Right cardiac atrium (tissue), 5 donors: ENCODE measurements at regions of chr14 and their contacts with region 1.

Region 1: DNA sequence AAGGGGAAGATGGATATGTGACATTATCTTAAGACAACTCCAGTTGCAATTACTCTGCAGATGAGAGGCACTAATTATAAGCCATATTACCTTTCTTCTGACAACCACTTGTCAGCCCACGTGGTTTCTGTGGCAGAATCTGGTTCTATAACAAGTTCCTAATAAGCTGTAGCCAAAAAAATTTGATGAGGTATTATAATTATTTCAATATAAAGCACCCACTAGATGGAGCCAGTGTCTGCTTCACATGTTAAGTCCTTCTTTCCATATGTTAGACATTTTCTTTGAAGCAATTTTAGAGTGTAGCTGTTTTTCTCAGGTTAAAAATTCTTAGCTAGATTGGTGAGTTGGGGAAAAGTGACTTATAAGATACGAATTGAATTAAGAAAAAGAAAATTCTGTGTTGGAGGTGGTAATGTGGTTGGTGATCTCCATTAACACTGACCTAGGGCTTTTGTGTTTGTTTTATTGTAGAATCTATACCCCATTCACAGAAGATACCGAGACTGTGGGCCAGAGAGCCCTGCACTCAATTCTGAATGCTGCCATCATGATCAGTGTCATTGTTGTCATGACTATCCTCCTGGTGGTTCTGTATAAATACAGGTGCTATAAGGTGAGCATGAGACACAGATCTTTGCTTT is 36.9 kb downstream of the PSEN1 start:
- DNase-seq: no peak
- ATAC-seq: peak in 1 of 2 donors; percentile 29
- H3K4me3 ChIP-seq: no peak overlapping the region
- H3K27ac ChIP-seq: no peak overlapping the region
- H3K4me1 ChIP-seq: no peaks in the 10 kb centered on the region
- H3K27me3 ChIP-seq: no peaks in the 10 kb centered on the region

Region 2: DNA sequence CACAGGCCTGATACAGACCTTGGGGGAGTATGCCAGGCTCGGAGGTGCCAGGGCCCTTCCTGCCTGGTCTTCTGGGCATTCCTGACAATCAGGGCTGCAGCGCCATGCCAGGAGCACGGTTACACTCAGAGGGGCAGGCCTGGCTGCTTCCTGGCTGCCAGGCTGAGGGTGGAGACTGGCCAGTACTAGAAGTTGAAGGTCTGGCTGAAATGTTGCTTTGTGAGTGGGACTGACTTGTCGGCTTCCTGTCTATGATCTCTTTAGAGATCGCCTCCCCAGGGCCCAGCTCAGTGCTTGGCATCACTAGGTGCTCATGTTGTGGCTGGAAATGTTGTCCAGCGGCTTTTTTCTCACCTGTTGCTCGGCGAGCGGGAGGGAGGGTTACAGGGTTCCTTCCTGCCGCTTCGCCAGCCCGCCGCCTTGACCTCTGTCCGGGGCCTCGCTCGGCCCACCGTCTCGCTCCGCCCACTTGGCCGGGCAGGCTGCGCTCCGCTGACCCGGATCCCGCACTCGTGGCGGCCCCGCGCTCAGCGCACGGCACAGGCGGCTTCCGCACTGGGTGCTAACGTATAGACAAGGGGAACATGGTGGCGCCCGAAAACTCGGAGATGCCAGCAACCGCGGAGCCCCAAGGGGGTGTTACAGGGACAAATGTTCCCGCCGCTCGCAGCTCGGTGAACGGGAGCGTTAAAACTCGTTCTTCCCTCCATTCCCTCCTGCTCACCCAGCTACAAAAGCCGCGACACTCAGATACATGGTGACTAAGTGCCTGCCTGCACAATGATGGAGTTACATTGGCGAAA is 96.7 kb after region 1 on chr14:
- intact Hi-C with region 1: loop called in 1 of 4 experiments (anchors 10 kb)
- DNase-seq: peak; percentile 67 to 87 (median 84)
- ATAC-seq: peak; percentile 80 to 82
- H3K4me3 ChIP-seq: peak overlapping the region; percentile 30
- H3K27ac ChIP-seq: no peak overlapping the region
- H3K4me1 ChIP-seq: peaks cover 3% of the 10 kb centered on the region
- H3K27me3 ChIP-seq: no peaks in the 10 kb centered on the region

Region 3: GRCh38 chr14:73311708-73312030 is 138.5 kb after region 1 on chr14:
- intact Hi-C with region 1: no loop called
- DNase-seq: no peak
- ATAC-seq: no peak
- H3K4me3 ChIP-seq: no peak overlapping the region
- H3K27ac ChIP-seq: no peak overlapping the region
- H3K4me1 ChIP-seq: no peaks in the 10 kb centered on the region
- H3K27me3 ChIP-seq: no peaks in the 10 kb centered on the region

Region 4: DNA sequence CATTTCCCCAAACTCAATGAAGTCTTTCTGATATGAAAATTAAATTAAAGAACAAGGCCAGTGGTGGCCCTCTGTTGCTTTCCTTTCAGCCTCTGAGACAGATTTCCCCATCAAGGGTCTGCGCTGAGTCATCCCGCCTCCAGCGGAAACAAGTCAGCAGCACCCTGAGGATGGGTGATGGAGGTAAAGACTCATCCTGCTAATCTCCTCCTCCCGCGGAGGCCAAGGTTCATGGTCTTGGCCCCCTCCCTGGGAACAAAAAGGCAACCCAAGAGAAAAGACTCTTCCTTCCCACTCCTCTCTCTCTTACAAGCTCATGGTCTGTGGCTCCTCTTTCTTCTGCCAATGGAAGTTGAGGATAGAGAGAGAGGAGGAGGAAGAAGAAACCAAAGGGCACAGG is 294.2 kb after region 1 on chr14:
- intact Hi-C with region 1: loop called in 3 of 4 experiments (anchors 5 to 10 kb)
- DNase-seq: peak in 1 of 3 donors; percentile 31
- ATAC-seq: no peak
- H3K4me3 ChIP-seq: no peak overlapping the region
- H3K27ac ChIP-seq: no peak overlapping the region
- H3K4me1 ChIP-seq: peaks cover 8% of the 10 kb centered on the region
- H3K27me3 ChIP-seq: no peaks in the 10 kb centered on the region

Region 5: DNA sequence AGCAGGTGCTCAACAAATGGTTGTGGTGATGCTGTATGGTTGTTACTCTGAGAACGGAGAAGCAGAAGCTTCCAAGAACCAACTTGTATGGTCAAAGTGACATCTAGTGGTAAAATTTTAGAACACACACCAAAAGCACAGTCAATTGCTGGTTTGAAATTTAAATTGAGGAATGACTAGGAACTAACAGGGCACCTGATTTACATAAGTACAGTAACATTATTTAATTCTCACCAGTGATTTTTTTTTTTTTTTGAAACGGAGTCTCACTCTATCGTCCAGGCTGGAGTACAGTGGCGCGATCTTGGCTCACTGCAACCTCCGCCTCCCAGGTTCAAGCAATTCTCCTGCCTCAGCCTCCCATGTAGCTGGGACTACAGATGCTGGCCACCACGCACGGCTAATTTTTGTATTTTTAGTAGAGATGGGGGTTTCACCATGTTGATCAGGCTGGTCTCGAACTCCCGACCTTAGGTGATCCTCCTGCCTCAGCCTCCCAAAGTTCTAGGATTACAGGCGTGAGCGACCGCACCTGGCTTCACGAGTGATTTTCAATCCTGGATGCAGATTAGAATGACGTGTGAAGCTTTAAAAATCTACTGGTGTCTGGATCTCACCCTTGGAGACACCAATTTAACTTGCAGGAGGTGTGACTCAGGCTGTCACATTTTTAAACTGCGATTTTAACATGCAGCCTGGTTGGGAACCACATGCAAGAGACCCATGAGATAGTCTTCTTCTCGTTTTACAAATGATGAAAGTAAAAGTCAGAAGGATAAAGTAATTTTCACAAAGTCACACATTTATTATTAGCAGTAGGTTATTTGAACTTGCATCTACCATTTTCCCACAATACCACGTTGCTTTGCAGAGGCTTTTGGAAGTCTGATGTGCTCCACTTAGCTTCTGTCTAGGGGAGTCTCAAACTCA is 299.2 kb after region 1 on chr14:
- intact Hi-C with region 1: loop called in 3 of 4 experiments (anchors 5 to 10 kb)
- DNase-seq: no peak
- ATAC-seq: peak; percentile 62 to 74
- H3K4me3 ChIP-seq: no peak overlapping the region
- H3K27ac ChIP-seq: no peak overlapping the region
- H3K4me1 ChIP-seq: no peaks in the 10 kb centered on the region
- H3K27me3 ChIP-seq: no peaks in the 10 kb centered on the region